Dorsolateral prefrontal cortex (tissue), 120 donors: ENCODE measurements at regions of chr17 and their contacts with region 1.

Region 1: GRCh38 chr17:13671771-13672170 is 70.0 kb upstream of the HS3ST3A1 start:
- DNase-seq: no peak
- H3K4me3 ChIP-seq: no peak overlapping the region
- H3K27ac ChIP-seq: no peak overlapping the region
- H3K27me3 ChIP-seq: no peaks in the 10 kb centered on the region
- CTCF ChIP-seq: no peak

Region 2: DNA sequence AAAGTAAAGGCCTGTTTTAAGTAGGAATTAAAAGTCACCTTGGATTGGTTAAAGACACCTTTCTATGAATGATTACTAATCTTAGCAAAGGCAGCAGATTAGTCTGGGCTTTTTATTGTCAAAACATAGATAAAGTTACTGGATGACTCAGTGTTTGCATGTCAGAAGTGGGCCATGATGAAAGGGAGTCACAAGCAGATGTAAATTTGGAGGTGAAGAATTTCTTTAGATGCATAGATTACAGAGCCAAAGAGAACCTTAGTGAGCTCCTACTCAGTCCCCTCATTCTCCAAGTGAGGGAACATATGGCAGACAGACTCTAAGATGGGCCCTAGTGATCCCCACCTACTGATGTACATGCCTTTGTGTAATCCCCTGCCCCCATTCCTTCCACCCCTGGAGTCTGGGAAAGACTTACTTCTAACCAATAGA is 194.6 kb before region 1 on chr17:
- intact Hi-C with region 1: no loop called
- DNase-seq: no peak
- H3K4me3 ChIP-seq: no peak overlapping the region
- H3K27ac ChIP-seq: no peak overlapping the region
- H3K27me3 ChIP-seq: peaks cover 0 to 13% (median 0%) of the 10 kb centered on the region in 45 donors
- CTCF ChIP-seq: no peak

Region 3: GRCh38 chr17:13619462-13619861 is 52.3 kb before region 1 on chr17:
- intact Hi-C with region 1: loop called in 1 of 2 experiments (anchors 10 kb)
- DNase-seq: no peak
- H3K4me3 ChIP-seq: no peak overlapping the region
- H3K27ac ChIP-seq: no peak overlapping the region
- H3K27me3 ChIP-seq: peaks cover 0 to 33% (median 4%) of the 10 kb centered on the region in 45 donors
- CTCF ChIP-seq: no peak